ENCODE measurements at regions of chr1 and their contacts with region 1.

Region 1: DNA sequence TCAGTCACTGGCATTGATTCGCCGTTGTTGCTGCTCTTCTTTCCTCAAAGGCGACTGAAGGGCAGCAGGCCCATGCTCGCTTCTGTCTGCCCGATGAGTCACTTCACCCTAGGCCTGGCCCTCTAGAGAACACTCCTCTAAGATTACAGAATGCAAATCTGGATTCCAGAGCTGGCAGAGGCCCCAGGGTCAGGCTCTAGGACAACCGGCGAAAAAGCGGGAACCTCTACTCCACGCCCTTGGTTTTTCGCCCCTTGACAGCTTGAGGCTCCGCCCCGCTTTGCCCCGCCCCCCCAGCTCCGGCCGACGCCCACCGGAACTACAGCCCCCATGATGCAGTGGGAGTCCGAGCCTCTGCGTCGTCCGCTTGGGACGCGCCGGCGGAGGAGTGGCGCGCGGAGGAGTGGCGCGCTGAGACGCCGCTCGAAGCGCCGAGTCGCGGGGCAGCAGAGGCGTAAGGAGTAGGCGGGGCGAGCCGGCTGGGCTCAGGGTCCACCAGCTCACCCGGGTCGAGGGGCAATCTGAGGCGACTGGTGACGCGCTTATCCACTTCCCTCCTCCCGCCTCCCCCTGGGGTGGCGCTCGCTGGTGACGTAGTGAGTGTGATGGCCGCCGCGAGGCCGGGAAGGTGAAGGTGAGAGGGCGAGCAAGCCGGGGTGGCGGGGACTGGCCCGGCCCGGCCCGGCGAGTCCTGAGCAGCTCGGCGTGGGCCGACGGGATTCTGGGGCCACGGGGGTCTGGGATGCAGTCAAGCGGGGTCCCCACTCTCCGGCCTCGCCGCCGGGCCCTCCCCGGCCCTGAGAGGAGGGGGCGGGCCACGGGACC is at the start of gene MFN2:
- DNase-seq: peak; percentile 95 to 97
- ATAC-seq: peak; percentile 90 to 95 (median 92)
- H3K4me3 ChIP-seq: peak within 1 kb of the TSS; percentile 64 to 99 (median 84)
- H3K27ac ChIP-seq: peak within 1 kb of the TSS; percentile 92 to 100 (median 98)
- H3K4me1 ChIP-seq: peaks cover 14 to 66% (median 58%) of the 10 kb centered on the region in 9 donors
- H3K27me3 ChIP-seq: no peaks in the 10 kb centered on the region
- CTCF ChIP-seq: no peak
- total RNA-seq, gene MFN2: 470 to 1,066 (median 788) TPM

Region 2: GRCh38 chr1:11893907-11894251 is 86.2 kb before region 1 on chr1:
- intact Hi-C with region 1: no loop called
- DNase-seq: peak; percentile 64 to 76
- ATAC-seq: peak; percentile 82 to 94 (median 90)
- H3K4me3 ChIP-seq: no peak overlapping the region
- H3K27ac ChIP-seq: no peak overlapping the region
- H3K4me1 ChIP-seq: peaks cover 0 to 9% (median 0%) of the 10 kb centered on the region in 9 donors
- H3K27me3 ChIP-seq: peaks cover 10 to 41% (median 36%) of the 10 kb centered on the region in 7 donors
- CTCF ChIP-seq: peak; percentile 86 to 93 (median 90)

Region 3: GRCh38 chr1:11907275-11908094 is 72.6 kb before region 1 on chr1:
- intact Hi-C with region 1: loop called in 5 of 10 experiments (anchors 1 to 10 kb)
- DNase-seq: peak; percentile 90 to 91
- ATAC-seq: peak; percentile 79 to 92 (median 86)
- H3K4me3 ChIP-seq: peak overlapping the region in 7 of 10 donors; percentile 49 to 82 (median 65)
- H3K27ac ChIP-seq: peak overlapping the region; percentile 84 to 100 (median 96)
- H3K4me1 ChIP-seq: peaks cover 0 to 22% (median 5%) of the 10 kb centered on the region in 9 donors
- H3K27me3 ChIP-seq: no peaks in the 10 kb centered on the region
- CTCF ChIP-seq: peak; percentile 35 to 98 (median 76)

Region 4: DNA sequence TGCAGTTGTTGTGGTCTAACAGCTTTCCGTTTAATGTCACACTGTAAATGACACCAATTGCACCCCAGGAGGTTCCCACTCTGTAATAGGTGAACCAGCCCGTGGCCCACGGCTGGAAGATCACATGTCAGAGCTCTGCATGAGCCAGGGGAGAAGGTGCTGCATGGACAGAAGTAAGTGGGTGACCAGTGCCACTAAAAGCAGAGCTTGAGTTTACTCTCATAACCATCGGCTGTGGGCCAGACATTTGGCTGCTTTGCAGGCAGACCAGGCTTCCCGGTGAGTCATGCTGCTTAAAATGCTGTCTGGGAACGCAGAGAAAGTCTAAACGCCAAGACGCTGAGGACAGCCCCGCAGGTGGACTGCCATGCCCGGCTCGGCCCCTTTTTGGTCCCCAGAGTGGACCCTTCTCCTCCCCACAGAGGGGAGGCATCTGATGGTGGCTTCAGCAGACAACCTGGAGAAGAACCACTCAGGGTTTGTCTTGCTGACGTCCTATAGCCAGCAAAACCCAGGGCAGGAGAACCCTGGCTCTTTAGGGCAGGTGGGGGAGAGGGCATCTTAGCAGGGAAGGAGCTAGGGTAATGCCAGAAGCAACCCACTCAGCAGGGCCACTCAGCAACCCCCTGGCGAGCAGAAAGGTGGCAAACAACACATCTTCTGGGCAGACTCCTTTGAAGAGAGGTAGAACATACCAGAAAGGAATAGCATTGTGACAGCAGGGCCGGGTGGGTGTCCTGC is 61.1 kb before region 1 on chr1:
- intact Hi-C with region 1: loop called in 3 of 10 experiments (anchors 5 to 10 kb)
- DNase-seq: peak; percentile 61 to 78
- ATAC-seq: peak; percentile 71 to 89 (median 86)
- H3K4me3 ChIP-seq: no peak overlapping the region
- H3K27ac ChIP-seq: peak overlapping the region in 9 of 10 donors; percentile 21 to 81 (median 71)
- H3K4me1 ChIP-seq: peaks cover 18 to 62% (median 58%) of the 10 kb centered on the region in 9 donors
- H3K27me3 ChIP-seq: no peaks in the 10 kb centered on the region
- CTCF ChIP-seq: no peak

Region 5: GRCh38 chr1:11934302-11935056 is 45.6 kb before region 1 on chr1 and contains the start of gene PLOD1:
- intact Hi-C with region 1: loop called in 5 of 10 experiments (anchors 2 to 5 kb)
- DNase-seq: peak; percentile 92 to 94
- ATAC-seq: peak; percentile 88 to 95 (median 90)
- H3K4me3 ChIP-seq: peak within 1 kb of the TSS; percentile 47 to 87 (median 69)
- H3K27ac ChIP-seq: peak within 1 kb of the TSS; percentile 59 to 94 (median 90)
- H3K4me1 ChIP-seq: peaks cover 21 to 82% (median 75%) of the 10 kb centered on the region in 9 donors
- H3K27me3 ChIP-seq: no peaks in the 10 kb centered on the region
- CTCF ChIP-seq: no peak
- total RNA-seq, gene PLOD1: 27.3 to 95.3 (median 44.4) TPM

Region 6: GRCh38 chr1:11948822-11949458 is 31.1 kb before region 1 on chr1:
- intact Hi-C with region 1: loop called in 1 of 10 experiments (anchors 1 kb)
- DNase-seq: no peak
- ATAC-seq: no peak
- H3K4me3 ChIP-seq: no peak overlapping the region
- H3K27ac ChIP-seq: no peak overlapping the region
- H3K4me1 ChIP-seq: peaks cover 0 to 12% (median 1%) of the 10 kb centered on the region in 9 donors
- H3K27me3 ChIP-seq: no peaks in the 10 kb centered on the region
- CTCF ChIP-seq: no peak

Region 7: GRCh38 chr1:12014141-12014991 is 34.3 kb after region 1 on chr1:
- intact Hi-C with region 1: no loop called
- DNase-seq: no peak
- ATAC-seq: peak in 1 of 8 donors; percentile 21
- H3K4me3 ChIP-seq: no peak overlapping the region
- H3K27ac ChIP-seq: peak overlapping the region in 7 of 10 donors; percentile 21 to 53 (median 33)
- H3K4me1 ChIP-seq: peaks cover 3 to 36% (median 17%) of the 10 kb centered on the region in 9 donors
- H3K27me3 ChIP-seq: no peaks in the 10 kb centered on the region
- CTCF ChIP-seq: no peak

Measured in heart right ventricle (tissue), 16 donors.